IMR-90 (cell line): ENCODE measurements at regions of chr9 and their contacts with region 1.

Region 1: DNA sequence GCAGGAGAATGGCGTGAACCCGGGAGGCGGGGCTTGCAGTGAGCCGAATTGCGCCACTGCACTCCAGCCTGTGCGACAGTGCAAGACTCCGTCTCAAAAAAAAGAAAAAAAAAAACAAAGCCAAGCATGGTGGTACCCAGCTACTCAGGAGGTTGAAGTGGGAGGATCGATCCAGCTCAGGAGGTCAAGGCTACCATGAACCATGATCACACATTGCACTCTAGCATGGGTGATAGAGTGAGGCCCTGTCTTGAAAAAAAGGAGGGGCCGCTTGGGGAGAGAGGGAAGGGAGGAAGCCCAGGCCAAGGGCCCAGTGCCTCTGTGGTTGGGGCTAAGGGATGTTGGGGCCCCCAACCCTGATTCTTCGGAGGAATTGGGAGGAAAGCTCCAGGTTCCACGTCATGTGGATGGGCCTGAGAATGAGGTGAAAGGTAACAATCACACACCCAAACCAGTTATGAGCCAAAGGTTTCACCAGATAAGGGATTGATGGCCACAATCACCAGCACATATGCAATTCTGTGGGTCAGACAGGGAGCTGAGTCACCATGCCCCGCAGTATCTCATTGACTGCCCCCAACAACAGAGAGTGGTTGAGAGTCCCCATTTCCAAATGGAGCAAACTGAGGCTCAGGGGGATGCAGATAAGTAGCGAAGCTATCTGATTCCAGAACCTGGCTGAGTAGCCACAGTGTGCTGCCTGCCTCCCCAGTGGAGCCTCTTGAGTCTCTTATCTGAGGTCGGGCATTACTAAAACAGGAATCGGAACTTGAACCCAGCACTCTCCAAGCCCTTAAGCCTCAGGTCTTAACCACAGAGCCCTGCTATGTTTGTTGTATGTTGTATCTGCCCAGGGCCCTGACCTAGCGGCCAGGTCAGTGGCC is 20.5 kb downstream of the SWI5 start:
- DNase-seq: peak; percentile 28
- ATAC-seq: no peak
- H3K4me3 ChIP-seq: no peak overlapping the region
- H3K27ac ChIP-seq: no peak overlapping the region
- H3K4me1 ChIP-seq: peaks cover 5% of the 10 kb centered on the region
- H3K27me3 ChIP-seq: no peaks in the 10 kb centered on the region
- CTCF ChIP-seq: no peak
- POLR2A ChIP-seq: no peak
- RAD21 ChIP-seq: no peak

Region 2: DNA sequence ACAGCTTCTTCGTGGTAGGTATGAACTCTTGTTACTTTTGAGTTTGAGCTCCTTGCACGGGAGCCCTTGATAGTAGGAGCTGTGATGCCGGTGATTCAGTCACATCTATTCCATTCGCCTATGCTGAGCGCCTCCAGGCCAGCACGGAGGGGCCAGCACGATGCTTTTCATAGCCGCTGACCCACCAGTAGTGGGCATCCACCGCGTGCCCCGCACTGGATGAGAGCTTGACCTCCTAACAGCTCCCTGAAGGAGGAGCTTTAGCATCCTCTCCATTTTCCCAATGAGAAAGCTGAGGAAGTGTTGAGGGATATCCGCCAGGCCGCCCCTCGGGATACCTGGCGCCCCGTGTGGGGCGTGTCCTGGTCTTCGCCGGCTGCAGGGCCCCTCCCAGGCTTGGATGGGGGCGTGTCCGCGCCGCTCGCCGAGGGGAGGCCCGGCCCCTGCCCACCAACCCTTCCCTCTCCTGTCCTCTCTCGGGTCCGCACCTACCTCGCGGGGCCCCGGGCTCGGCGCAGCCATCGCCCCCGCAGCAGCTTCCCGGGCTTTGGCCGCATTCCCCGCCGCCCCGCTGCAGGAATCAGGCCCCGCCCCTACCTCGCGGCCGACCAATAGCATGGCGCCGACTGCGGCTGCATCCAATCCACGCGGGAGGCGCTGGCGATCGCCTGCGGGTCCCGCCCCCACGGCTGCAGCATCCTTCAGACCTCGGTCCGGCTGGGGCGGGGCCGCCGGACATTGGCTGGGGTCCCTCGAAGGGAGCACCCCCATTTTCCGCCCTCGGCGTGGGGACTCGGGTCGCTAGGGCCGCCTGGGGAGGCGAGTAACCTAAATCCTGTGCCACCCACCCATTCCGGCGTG is 366.1 kb before region 1 on chr9 and contains the start of gene PIP5KL1:
- CTCF ChIA-PET with region 1: no interaction called
- POLR2A ChIA-PET with region 1: no interaction called
- dilution Hi-C with region 1: no loop called
- in situ Hi-C with region 1: no loop called
- intact Hi-C with region 1: no loop called
- DNase-seq: peak; percentile 82
- ATAC-seq: peak; percentile 94
- H3K4me3 ChIP-seq: peak within 1 kb of the TSS; percentile 60
- H3K27ac ChIP-seq: peak within 1 kb of the TSS; percentile 23
- H3K4me1 ChIP-seq: peaks cover 8% of the 10 kb centered on the region
- H3K27me3 ChIP-seq: no peaks in the 10 kb centered on the region
- CTCF ChIP-seq: 0 out of 2 replicates have a peak, but pooled peaks have one; percentile 10
- POLR2A ChIP-seq: no peak
- RAD21 ChIP-seq: no peak
- total RNA-seq, gene PIP5KL1: 0.28 and 0.36 TPM in 2 replicates

Region 3: GRCh38 chr9:128322404-128323211 is 26.0 kb after region 1 on chr9 and contains the starts of genes COQ4 and TRUB2:
- CTCF ChIA-PET with region 1: interaction called, 4 read pairs
- POLR2A ChIA-PET with region 1: no interaction called
- dilution Hi-C with region 1: no loop called
- in situ Hi-C with region 1: no loop called
- intact Hi-C with region 1: loop called (anchors 2 kb)
- DNase-seq: peak; percentile 92
- ATAC-seq: peak; percentile 93
- H3K4me3 ChIP-seq: peak within 1 kb of the TSS; percentile 57
- H3K27ac ChIP-seq: peak within 1 kb of the TSS; percentile 99
- H3K4me1 ChIP-seq: peaks cover 5% of the 10 kb centered on the region
- H3K27me3 ChIP-seq: no peaks in the 10 kb centered on the region
- CTCF ChIP-seq: no peak
- POLR2A ChIP-seq: peak; percentile 26
- RAD21 ChIP-seq: no peak
- total RNA-seq, gene COQ4: 20.0 and 20.1 TPM in 2 replicates
- total RNA-seq, gene TRUB2: 16.7 and 21.3 TPM in 2 replicates

Region 4: DNA sequence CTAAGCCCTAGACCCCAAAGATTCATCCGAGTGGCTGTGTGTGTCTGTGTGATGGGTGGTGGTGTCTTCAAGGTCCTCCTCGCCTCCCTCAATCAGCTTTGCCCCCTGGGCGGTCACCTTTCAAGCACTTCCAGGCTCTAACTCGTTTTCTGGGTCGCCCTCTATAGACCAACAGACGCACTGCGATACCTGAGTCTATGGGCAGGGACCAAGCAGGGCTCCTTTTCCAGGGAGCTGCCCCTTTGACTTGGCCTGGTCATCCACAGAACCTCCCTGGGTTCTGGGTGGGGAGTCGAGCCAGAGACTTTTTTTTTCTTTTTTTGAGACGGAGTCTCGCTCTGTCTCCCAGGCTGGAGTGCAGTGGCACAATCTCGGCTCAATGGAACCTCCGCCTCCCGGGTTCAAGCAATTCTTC is 44.9 kb after region 1 on chr9:
- CTCF ChIA-PET with region 1: interaction called, 7 read pairs
- POLR2A ChIA-PET with region 1: no interaction called
- dilution Hi-C with region 1: no loop called
- in situ Hi-C with region 1: no loop called
- intact Hi-C with region 1: loop called (anchors 1 kb)
- DNase-seq: peak; percentile 59
- ATAC-seq: peak; percentile 53
- H3K4me3 ChIP-seq: peak overlapping the region; percentile 94
- H3K27ac ChIP-seq: no peak overlapping the region
- H3K4me1 ChIP-seq: peaks cover 4% of the 10 kb centered on the region; the same call in 1 of the 2 replicates
- H3K27me3 ChIP-seq: no peaks in the 10 kb centered on the region
- CTCF ChIP-seq: peak; percentile 65
- POLR2A ChIP-seq: no peak
- RAD21 ChIP-seq: peak; percentile 60

Region 5: DNA sequence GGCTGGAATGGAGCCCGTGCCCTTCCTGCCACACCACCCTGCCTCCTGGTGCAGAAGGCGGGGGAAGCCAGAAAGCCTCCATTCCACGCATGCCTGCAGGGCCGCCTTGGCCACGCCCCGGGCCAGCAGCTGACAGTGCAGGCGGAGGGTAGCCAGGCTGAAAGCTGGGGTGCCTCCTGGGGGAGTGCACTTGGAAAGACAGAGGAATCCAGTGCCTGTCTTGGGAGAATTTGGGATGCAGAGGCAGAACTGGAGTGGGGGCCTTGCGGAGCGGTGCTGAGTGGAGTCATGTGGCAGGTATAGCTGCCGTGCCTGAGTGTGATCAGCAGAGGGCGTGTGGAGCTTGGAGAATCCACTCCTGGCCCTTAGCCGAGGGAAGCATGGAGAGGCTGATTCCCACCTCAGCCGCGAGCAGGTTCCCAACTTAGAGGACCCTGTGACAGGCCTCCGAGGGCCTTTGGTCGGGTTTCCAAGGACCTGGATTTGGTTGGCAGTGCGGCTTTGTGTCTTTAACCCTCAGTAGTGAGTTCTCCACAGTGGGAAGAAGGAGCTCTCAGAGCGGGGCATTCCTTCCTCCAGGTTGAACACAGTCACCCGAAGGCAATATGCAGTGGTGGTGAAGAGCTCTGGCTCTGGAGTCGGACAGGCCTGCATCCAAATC is 65.5 kb after region 1 on chr9:
- CTCF ChIA-PET with region 1: interaction called, 8 read pairs
- POLR2A ChIA-PET with region 1: no interaction called
- dilution Hi-C with region 1: no loop called
- in situ Hi-C with region 1: no loop called
- intact Hi-C with region 1: loop called (anchors 1 kb)
- DNase-seq: peak; percentile 78
- ATAC-seq: peak; percentile 90
- H3K4me3 ChIP-seq: peak overlapping the region; percentile 30
- H3K27ac ChIP-seq: peak overlapping the region; percentile 31
- H3K4me1 ChIP-seq: peaks cover 10% of the 10 kb centered on the region; the same call in 1 of the 2 replicates
- H3K27me3 ChIP-seq: no peaks in the 10 kb centered on the region
- CTCF ChIP-seq: peak; percentile 89
- POLR2A ChIP-seq: no peak
- RAD21 ChIP-seq: peak; percentile 88

Region 6: DNA sequence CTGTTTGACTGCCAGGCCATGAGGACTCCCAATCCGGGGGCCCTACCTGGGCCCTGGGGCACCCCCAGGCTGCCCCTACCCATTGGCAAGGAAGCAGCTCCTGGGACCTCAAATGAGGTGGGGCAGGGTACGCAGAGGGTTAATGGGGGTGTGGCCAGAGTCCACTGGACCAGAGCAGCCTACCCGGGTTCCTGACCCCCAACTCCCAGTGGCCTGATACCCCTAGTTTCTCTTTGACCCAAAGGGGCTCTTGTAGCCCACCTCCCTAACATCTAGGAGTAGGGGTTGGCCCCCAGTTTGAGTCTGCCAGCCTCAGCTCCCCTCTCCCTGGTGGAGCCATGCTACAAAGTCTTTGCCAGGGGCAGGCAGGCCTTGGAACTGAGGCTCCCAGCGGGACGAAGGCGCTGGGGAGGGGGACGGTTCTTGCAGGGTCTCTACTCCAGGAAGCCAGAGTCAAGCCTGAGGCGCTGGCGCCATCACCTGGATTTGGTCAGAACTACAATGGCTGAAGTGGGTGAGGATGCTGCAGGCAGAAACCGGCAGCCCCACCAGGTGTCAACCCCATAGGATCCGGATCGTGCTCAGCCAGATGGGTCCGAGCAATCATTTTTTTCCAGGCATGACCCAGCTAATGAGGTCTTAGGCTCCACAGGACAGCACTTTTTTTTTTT is 115.7 kb after region 1 on chr9:
- CTCF ChIA-PET with region 1: interaction called, 3 read pairs
- POLR2A ChIA-PET with region 1: no interaction called
- dilution Hi-C with region 1: no loop called
- in situ Hi-C with region 1: no loop called
- intact Hi-C with region 1: loop called (anchors 2 kb)
- DNase-seq: peak; percentile 31
- ATAC-seq: peak; percentile 76
- H3K4me3 ChIP-seq: no peak overlapping the region
- H3K27ac ChIP-seq: no peak overlapping the region
- H3K4me1 ChIP-seq: no peaks in the 10 kb centered on the region
- H3K27me3 ChIP-seq: peaks cover 24% of the 10 kb centered on the region
- CTCF ChIP-seq: peak; percentile 68
- POLR2A ChIP-seq: no peak
- RAD21 ChIP-seq: peak; percentile 84

Region 7: GRCh38 chr9:128552153-128552743 is 255.7 kb after region 1 on chr9 and contains the start of gene SPTAN1:
- CTCF ChIA-PET with region 1: no interaction called
- POLR2A ChIA-PET with region 1: no interaction called
- dilution Hi-C with region 1: no loop called
- in situ Hi-C with region 1: loop called (anchors 10 kb)
- intact Hi-C with region 1: no loop called
- DNase-seq: peak; percentile 84
- ATAC-seq: peak; percentile 86
- H3K4me3 ChIP-seq: peak within 1 kb of the TSS; percentile 99
- H3K27ac ChIP-seq: peak within 1 kb of the TSS; percentile 77
- H3K4me1 ChIP-seq: peaks cover 13% of the 10 kb centered on the region
- H3K27me3 ChIP-seq: no peaks in the 10 kb centered on the region
- CTCF ChIP-seq: no peak
- POLR2A ChIP-seq: peak; percentile 100
- RAD21 ChIP-seq: no peak
- total RNA-seq, gene SPTAN1: 327 and 345 TPM in 2 replicates